ENCODE measurements at regions of chr10 and their contacts with region 1.

Region 1: DNA sequence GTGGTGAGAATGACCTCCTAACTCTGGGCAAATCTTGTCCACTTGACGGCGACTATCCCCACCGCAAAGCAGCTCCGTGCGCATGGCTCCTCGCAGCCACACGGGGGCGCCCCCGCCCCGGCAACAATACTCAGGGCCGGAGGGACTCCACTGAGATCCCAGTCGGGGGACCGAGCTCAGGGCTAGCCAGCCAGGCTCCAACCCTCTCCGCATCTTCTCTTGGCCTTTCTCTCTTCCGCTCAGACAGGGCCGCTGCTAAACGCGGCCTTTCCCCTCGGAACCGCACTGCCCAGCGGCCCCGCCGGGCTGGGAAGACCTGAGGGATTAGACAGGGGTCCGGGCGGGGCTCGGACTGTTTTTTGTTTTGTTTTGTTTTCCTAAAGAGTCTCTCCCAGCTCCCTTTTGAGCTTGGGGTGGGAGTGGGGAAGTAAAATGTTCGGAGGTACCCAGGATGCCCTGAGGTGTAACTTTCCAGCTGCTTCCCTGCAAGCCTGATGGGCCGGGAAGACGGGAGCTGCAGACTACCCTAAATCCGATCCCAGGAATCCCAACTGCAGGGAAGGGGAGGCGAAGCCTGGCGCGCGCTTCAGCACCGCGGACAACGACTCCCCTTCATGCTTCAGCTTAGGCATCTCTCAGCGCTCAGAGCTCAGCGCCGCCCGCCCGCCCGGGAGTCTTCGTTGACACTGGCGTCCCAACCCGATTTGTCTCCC is 2.7 kb downstream of the KCNIP2 start:
- DNase-seq: peak; percentile 83 to 86
- ATAC-seq: peak; percentile 78 to 90
- H3K4me3 ChIP-seq: peak overlapping the region; percentile 38; the same call in 1 of the 3 replicates
- H3K27ac ChIP-seq: peak overlapping the region in 1 of 2 experiments; percentile 77; a peak in 3 of 6 replicates
- H3K4me1 ChIP-seq: peaks cover 20% of the 10 kb centered on the region
- CTCF ChIP-seq: peak; percentile 96
- EP300 ChIP-seq: no peak
- POLR2A ChIP-seq: no peak
- RAD21 ChIP-seq: peak; percentile 87 to 95

Region 2: GRCh38 chr10:101545898-101546297 is 295.0 kb before region 1 on chr10:
- CTCF ChIA-PET with region 1: no interaction called
- POLR2A ChIA-PET with region 1: no interaction called
- DNase-seq: no peak
- ATAC-seq: no peak
- H3K4me3 ChIP-seq: no peak overlapping the region
- H3K27ac ChIP-seq: no peak overlapping the region
- H3K4me1 ChIP-seq: no peaks in the 10 kb centered on the region
- CTCF ChIP-seq: no peak
- EP300 ChIP-seq: no peak
- POLR2A ChIP-seq: no peak
- RAD21 ChIP-seq: no peak

Region 3: DNA sequence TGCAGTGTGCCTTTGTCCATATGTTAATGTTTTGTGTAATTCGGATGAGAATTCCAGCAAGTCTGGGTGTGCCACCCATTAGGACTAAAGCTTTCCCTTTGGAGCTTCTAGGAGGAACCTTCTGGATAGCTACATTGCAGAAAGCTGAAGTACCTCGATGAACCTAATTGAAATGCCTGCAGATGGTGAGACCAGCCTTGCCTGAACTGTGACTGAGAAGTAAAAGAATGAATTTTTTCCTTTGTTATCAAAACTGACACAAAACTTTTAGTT is 114.8 kb before region 1 on chr10:
- CTCF ChIA-PET with region 1: no interaction called
- POLR2A ChIA-PET with region 1: no interaction called
- DNase-seq: no peak
- ATAC-seq: no peak
- H3K4me3 ChIP-seq: no peak overlapping the region
- H3K27ac ChIP-seq: no peak overlapping the region
- H3K4me1 ChIP-seq: no peaks in the 10 kb centered on the region
- CTCF ChIP-seq: no peak
- EP300 ChIP-seq: no peak
- POLR2A ChIP-seq: no peak
- RAD21 ChIP-seq: no peak

Region 4: GRCh38 chr10:101782811-101783735 is 57.8 kb before region 1 on chr10 and contains the start of gene NPM3:
- CTCF ChIA-PET with region 1: interaction called, 11 read pairs
- POLR2A ChIA-PET with region 1: no interaction called
- DNase-seq: peak; percentile 81 to 94
- ATAC-seq: peak; percentile 64 to 81
- H3K4me3 ChIP-seq: peak within 1 kb of the TSS; percentile 72
- H3K27ac ChIP-seq: peak within 1 kb of the TSS; percentile 84 to 93
- H3K4me1 ChIP-seq: peaks cover 32% of the 10 kb centered on the region
- CTCF ChIP-seq: no peak
- EP300 ChIP-seq: no peak
- POLR2A ChIP-seq: peak; percentile 51
- RAD21 ChIP-seq: no peak
- polyA plus RNA-seq, gene NPM3: 41.5 and 45.0 TPM in 2 replicates

Region 5: GRCh38 chr10:101858723-101859500 is 18.0 kb after region 1 on chr10:
- CTCF ChIA-PET with region 1: interaction called, 71 read pairs
- POLR2A ChIA-PET with region 1: no interaction called
- DNase-seq: no peak
- ATAC-seq: no peak
- H3K4me3 ChIP-seq: no peak overlapping the region
- H3K27ac ChIP-seq: no peak overlapping the region
- H3K4me1 ChIP-seq: peaks cover 10% of the 10 kb centered on the region; the same call in 2 of the 3 replicates
- CTCF ChIP-seq: no peak
- EP300 ChIP-seq: no peak
- POLR2A ChIP-seq: no peak
- RAD21 ChIP-seq: no peak

Region 6: GRCh38 chr10:101897633-101898032 is 56.7 kb after region 1 on chr10:
- CTCF ChIA-PET with region 1: interaction called, 18 read pairs
- POLR2A ChIA-PET with region 1: no interaction called
- DNase-seq: no peak
- ATAC-seq: peak in 1 of 2 experiments; percentile 59; a peak in 3 of 6 replicates
- H3K4me3 ChIP-seq: no peak overlapping the region
- H3K27ac ChIP-seq: no peak overlapping the region
- H3K4me1 ChIP-seq: peaks cover 23% of the 10 kb centered on the region
- CTCF ChIP-seq: no peak
- EP300 ChIP-seq: no peak
- POLR2A ChIP-seq: no peak
- RAD21 ChIP-seq: no peak

Region 7: DNA sequence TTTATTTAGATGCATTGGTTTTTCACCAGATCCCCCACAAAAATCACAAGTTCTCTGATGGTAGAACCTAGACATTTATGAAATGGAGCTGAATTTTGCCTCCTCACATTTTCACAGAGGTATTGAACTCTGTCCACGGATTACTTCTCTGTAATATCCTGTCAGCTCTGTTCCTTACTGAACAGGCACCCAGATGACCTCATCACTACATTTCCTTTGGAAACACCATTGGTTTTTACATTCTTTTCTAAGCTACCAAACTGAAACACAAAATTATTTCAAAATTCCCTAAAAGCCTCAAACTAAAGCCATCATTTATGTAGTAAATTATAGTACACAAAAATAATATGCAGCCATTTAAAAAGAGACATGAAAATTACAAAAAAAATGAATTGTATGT is 101.0 kb after region 1 on chr10:
- CTCF ChIA-PET with region 1: interaction called, 20 read pairs
- POLR2A ChIA-PET with region 1: no interaction called
- DNase-seq: no peak
- ATAC-seq: no peak
- H3K4me3 ChIP-seq: no peak overlapping the region
- H3K27ac ChIP-seq: no peak overlapping the region
- H3K4me1 ChIP-seq: peaks cover 51% of the 10 kb centered on the region
- CTCF ChIP-seq: no peak
- EP300 ChIP-seq: no peak
- POLR2A ChIP-seq: no peak
- RAD21 ChIP-seq: no peak

Region 8: DNA sequence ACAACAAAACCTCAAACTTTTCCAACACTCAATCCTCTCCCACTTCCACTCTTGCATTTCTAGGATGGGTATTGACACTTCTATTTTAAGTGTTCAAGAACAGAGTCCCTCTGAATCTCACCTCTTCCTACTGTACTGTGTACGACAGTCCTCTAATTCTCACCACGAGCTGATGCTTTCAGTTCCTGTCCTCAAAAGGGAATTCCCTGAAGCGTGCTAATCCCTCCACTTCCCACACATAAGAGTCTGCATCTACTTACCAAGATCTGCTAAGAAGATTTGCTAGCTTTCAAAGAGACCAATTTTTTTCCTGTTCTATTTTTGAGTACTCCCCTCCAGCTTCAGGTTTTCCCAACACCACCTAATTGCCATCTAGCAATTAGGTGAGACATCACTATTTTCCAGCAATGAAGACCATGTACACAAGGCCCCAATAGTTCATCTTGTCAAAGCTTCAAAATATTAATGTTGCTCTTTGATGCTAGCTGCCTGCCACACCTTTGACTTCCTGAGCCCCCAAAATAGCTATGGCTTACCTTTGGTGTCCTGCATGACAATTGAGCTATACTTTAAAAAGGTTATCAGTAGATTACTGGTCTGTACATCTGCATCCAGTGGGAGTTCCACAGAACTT is 160.7 kb after region 1 on chr10:
- CTCF ChIA-PET with region 1: interaction called, 379 read pairs
- POLR2A ChIA-PET with region 1: no interaction called
- DNase-seq: no peak
- ATAC-seq: no peak
- H3K4me3 ChIP-seq: no peak overlapping the region
- H3K27ac ChIP-seq: no peak overlapping the region
- H3K4me1 ChIP-seq: no peaks in the 10 kb centered on the region; the same call in 2 of the 3 replicates
- CTCF ChIP-seq: no peak
- EP300 ChIP-seq: no peak
- POLR2A ChIP-seq: no peak
- RAD21 ChIP-seq: no peak